ENCODE measurements at regions of chr11 and their contacts with region 1.

Region 1: DNA sequence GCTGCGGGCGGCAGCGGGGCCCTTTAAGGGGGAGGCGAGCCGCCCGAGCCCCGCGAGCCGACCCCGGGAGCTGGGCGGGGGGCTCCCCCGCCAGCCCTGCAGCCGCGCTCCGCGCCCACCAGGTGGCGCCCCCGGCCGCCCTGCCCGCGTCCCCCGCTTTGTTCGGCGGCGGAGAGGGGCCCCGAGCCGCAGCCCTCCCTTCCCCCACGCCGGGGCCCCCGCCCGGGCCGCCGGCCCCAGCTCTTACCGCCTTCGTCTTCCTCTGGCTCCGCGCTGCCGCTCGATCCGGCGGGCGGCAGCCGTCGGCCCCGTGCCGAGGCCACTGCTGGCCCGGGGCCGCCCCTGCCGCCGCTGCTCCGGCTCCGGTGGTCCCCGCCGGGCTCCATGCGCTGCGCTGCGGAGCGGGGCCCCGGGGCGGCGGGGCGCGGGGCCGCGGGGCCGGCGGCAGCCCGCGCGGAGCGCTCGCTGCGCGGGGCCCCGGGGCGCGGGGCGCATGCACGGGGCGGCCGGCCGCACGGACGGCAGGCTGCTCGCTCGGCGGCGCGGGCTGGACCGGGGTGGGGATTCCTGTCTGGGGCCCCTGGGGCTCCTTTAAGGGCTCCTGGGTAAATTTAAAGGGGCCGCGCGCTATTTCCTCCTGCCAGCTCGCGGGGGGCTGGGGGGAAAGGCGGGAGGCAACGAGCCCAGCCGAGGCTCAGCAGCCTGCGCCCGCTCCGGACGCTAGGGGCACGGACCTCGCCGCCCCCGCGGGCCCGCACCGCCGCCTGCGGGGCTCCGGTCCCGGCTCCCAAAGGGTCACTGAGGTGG is at the start of gene ZFTA:
- DNase-seq: peak; percentile 80
- ATAC-seq: peak; percentile 68
- H3K4me3 ChIP-seq: peak within 1 kb of the TSS; percentile 18 to 89 (median 67)
- H3K4me3 Mint-ChIP-seq: peak within 1 kb of the TSS; percentile 89
- H3K27ac ChIP-seq: peak within 1 kb of the TSS in 1 of 2 donors; percentile 44
- H3K27ac Mint-ChIP-seq: peak within 1 kb of the TSS; percentile 78
- H3K4me1 ChIP-seq: peaks cover 14 to 21% of the 10 kb centered on the region in 2 donors
- H3K4me1 Mint-ChIP-seq: peaks cover 13% of the 10 kb centered on the region
- H3K27me3 ChIP-seq: peaks cover 0 to 17% (median 2%) of the 10 kb centered on the region in 4 experiments
- H3K27me3 Mint-ChIP-seq: peaks cover 10% of the 10 kb centered on the region
- CTCF ChIP-seq: peak; percentile 67
- total RNA-seq, gene ZFTA: 11.8 and 13.3 TPM in 2 replicates

Region 2: GRCh38 chr11:63813035-63813562 is 44.7 kb after region 1 on chr11 and contains the start of gene SPINDOC:
- CTCF ChIA-PET with region 1: interaction called, 3 read pairs
- POLR2A ChIA-PET with region 1: interaction called, 3 read pairs
- intact Hi-C with region 1: loop called (anchors 2 kb)
- DNase-seq: peak; percentile 76
- ATAC-seq: peak; percentile 95
- H3K4me3 ChIP-seq: peak within 1 kb of the TSS; percentile 34 to 91 (median 83)
- H3K4me3 Mint-ChIP-seq: peak within 1 kb of the TSS; percentile 86
- H3K27ac ChIP-seq: peak within 1 kb of the TSS in 1 of 2 donors; percentile 59
- H3K27ac Mint-ChIP-seq: peak within 1 kb of the TSS; percentile 41
- H3K4me1 ChIP-seq: peaks cover 13 to 18% of the 10 kb centered on the region in 2 donors
- H3K4me1 Mint-ChIP-seq: peaks cover 22% of the 10 kb centered on the region
- H3K27me3 ChIP-seq: no peaks in the 10 kb centered on the region
- H3K27me3 Mint-ChIP-seq: no peaks in the 10 kb centered on the region
- CTCF ChIP-seq: no peak
- total RNA-seq, gene SPINDOC: 23.9 and 27.5 TPM in 2 replicates

Region 3: GRCh38 chr11:63945477-63946163 is 177.2 kb after region 1 on chr11:
- CTCF ChIA-PET with region 1: interaction called, 29 read pairs
- POLR2A ChIA-PET with region 1: no interaction called
- intact Hi-C with region 1: no loop called
- DNase-seq: peak; percentile 63
- ATAC-seq: peak; percentile 63
- H3K4me3 ChIP-seq: no peak overlapping the region
- H3K4me3 Mint-ChIP-seq: no peak overlapping the region
- H3K27ac ChIP-seq: no peak overlapping the region
- H3K27ac Mint-ChIP-seq: peak overlapping the region; percentile 15
- H3K4me1 ChIP-seq: peaks cover 12 to 14% of the 10 kb centered on the region in 2 donors
- H3K4me1 Mint-ChIP-seq: peaks cover 20% of the 10 kb centered on the region
- H3K27me3 ChIP-seq: no peaks in the 10 kb centered on the region
- H3K27me3 Mint-ChIP-seq: no peaks in the 10 kb centered on the region
- CTCF ChIP-seq: peak; percentile 61

Region 4: DNA sequence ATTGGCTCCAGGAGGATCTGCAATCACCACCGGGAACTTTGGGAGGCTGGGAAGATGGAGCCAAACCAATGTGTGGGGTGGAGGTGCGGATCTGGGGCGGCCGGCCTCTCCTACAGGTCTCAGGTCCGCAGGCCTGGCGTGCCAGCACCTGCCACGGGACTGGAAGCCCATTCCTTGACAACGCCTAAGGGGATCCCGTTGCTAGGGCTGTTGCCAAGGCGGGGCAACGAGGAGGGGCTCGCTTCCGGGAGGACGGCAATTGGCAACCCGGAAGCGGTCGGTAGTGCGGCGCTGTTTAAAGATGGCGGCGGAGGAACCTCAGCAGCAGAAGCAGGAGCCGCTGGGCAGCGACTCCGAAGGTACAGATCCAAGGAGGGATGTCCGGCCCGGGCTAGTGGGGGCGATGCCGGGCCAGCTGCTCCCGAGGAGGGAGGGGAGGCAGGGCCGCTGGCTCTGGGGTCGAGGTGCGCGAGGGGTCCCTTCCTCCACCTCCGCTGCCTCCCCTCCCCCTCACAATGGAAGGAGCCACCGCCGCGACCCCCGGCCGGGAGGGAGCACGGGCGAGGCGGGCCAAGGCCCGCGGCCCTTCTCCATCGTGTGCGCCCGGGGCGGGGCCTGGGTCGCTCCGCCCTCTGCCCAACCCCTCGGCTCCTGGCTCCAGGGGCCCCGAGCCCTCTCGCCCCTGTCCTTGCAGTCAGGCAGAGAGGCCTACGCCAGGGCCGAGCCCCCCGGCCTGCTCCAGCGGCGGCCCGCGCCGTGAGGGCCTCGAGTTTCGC is 217.9 kb after region 1 on chr11 and contains the start of gene OTUB1:
- CTCF ChIA-PET with region 1: no interaction called
- POLR2A ChIA-PET with region 1: interaction called, 3 read pairs
- intact Hi-C with region 1: loop called (anchors 2 kb)
- DNase-seq: peak; percentile 89
- ATAC-seq: peak; percentile 84
- H3K4me3 ChIP-seq: peak within 1 kb of the TSS; percentile 76 to 96 (median 93)
- H3K4me3 Mint-ChIP-seq: peak within 1 kb of the TSS; percentile 99
- H3K27ac ChIP-seq: peak within 1 kb of the TSS; percentile 76 to 94
- H3K27ac Mint-ChIP-seq: peak within 1 kb of the TSS; percentile 97
- H3K4me1 ChIP-seq: peaks cover 22 to 39% of the 10 kb centered on the region in 2 donors
- H3K4me1 Mint-ChIP-seq: peaks cover 42% of the 10 kb centered on the region
- H3K27me3 ChIP-seq: no peaks in the 10 kb centered on the region
- H3K27me3 Mint-ChIP-seq: no peaks in the 10 kb centered on the region
- CTCF ChIP-seq: no peak
- total RNA-seq, gene OTUB1: 71.0 and 78.2 TPM in 2 replicates

Region 5: DNA sequence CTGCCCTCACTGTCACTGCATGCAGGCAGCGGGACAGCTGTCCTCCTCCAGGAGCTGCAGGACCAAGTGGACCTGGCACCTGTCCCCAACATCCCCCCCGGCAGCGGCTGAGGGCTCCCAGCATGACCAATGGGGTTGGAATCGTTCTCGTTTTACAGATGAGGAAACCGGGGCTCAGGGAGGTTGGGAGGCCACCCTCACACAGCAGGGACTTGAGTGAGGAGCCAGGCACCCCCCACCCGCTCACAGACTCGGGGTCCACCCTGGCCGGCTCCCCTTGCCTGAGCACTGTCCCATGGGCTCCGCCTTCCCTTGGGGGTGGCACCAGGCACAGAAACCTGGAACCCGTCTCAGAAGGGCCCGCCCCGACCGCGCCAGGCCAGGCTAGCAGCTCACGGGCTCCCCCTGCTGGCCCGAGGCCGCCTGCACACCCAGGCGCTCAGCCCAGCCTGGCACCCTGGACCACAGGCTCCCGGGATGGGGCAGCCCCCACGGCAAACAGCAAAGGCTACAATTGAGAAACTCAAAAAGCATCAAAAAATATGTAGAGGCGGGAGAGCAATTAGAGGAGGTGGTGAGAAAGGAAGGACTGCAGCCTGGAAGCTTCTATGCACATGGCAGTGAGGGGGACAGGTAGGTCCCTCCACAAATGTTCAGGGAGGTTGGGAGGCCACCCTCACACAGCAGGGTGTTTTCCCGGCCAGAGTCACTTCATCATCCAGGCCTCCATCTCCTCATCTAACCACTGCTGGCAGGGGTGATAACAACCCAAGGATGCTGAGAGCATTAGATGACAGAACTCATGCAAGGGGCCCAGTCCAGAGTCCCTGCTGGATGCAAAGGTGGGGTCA is 384.6 kb after region 1 on chr11:
- CTCF ChIA-PET with region 1: interaction called, 19 read pairs
- POLR2A ChIA-PET with region 1: no interaction called
- intact Hi-C with region 1: loop called (anchors 1 kb)
- DNase-seq: peak; percentile 79
- ATAC-seq: peak; percentile 97
- H3K4me3 ChIP-seq: no peak overlapping the region
- H3K4me3 Mint-ChIP-seq: no peak overlapping the region
- H3K27ac ChIP-seq: no peak overlapping the region
- H3K27ac Mint-ChIP-seq: no peak overlapping the region
- H3K4me1 ChIP-seq: peaks cover 0 to 12% of the 10 kb centered on the region in 2 donors
- H3K4me1 Mint-ChIP-seq: peaks cover 2% of the 10 kb centered on the region
- H3K27me3 ChIP-seq: no peaks in the 10 kb centered on the region
- H3K27me3 Mint-ChIP-seq: no peaks in the 10 kb centered on the region
- CTCF ChIP-seq: peak; percentile 99

Measured in B cell (primary cell).